ENCODE measurements at regions of chr6 and their contacts with region 1.

Region 1: GRCh38 chr6:28838634-28839442 is 84.9 kb downstream of the TRIM27 start:
- DNase-seq: peak; percentile 91
- H3K4me3 Mint-ChIP-seq: peak overlapping the region; percentile 95
- H3K27ac Mint-ChIP-seq: peak overlapping the region; percentile 86
- H3K4me1 Mint-ChIP-seq: peaks cover 9% of the 10 kb centered on the region
- H3K27me3 Mint-ChIP-seq: peaks cover 21% of the 10 kb centered on the region

Region 2: GRCh38 chr6:28489366-28490204 is 349.3 kb before region 1 on chr6:
- CTCF ChIA-PET with region 1: no interaction called
- intact Hi-C with region 1: loop called (anchors 10 kb)
- DNase-seq: peak; percentile 76
- H3K4me3 Mint-ChIP-seq: peak overlapping the region; percentile 81
- H3K27ac Mint-ChIP-seq: peak overlapping the region; percentile 79
- H3K4me1 Mint-ChIP-seq: peaks cover 23% of the 10 kb centered on the region
- H3K27me3 Mint-ChIP-seq: peaks cover 59% of the 10 kb centered on the region

Region 3: GRCh38 chr6:28863604-28864320 is 24.9 kb after region 1 on chr6:
- CTCF ChIA-PET with region 1: interaction called, 68 read pairs
- intact Hi-C with region 1: loop called (anchors 1 kb)
- DNase-seq: peak; percentile 89
- H3K4me3 Mint-ChIP-seq: peak overlapping the region; percentile 86
- H3K27ac Mint-ChIP-seq: peak overlapping the region; percentile 92
- H3K4me1 Mint-ChIP-seq: peaks cover 33% of the 10 kb centered on the region
- H3K27me3 Mint-ChIP-seq: peaks cover 3% of the 10 kb centered on the region

Region 4: GRCh38 chr6:28895134-28895812 is 56.4 kb after region 1 on chr6:
- CTCF ChIA-PET with region 1: interaction called, 9 read pairs
- intact Hi-C with region 1: loop called (anchors 1 kb)
- DNase-seq: peak; percentile 98
- H3K4me3 Mint-ChIP-seq: peak overlapping the region; percentile 96
- H3K27ac Mint-ChIP-seq: peak overlapping the region; percentile 100
- H3K4me1 Mint-ChIP-seq: peaks cover 6% of the 10 kb centered on the region
- H3K27me3 Mint-ChIP-seq: peaks cover 3% of the 10 kb centered on the region

Region 5: GRCh38 chr6:28981833-28982475 is 143.1 kb after region 1 on chr6:
- CTCF ChIA-PET with region 1: interaction called, 13 read pairs
- intact Hi-C with region 1: loop called (anchors 1 kb)
- DNase-seq: peak; percentile 78
- H3K4me3 Mint-ChIP-seq: peak overlapping the region; percentile 88
- H3K27ac Mint-ChIP-seq: peak overlapping the region; percentile 84
- H3K4me1 Mint-ChIP-seq: peaks cover 50% of the 10 kb centered on the region
- H3K27me3 Mint-ChIP-seq: peaks cover 29% of the 10 kb centered on the region

Region 6: DNA sequence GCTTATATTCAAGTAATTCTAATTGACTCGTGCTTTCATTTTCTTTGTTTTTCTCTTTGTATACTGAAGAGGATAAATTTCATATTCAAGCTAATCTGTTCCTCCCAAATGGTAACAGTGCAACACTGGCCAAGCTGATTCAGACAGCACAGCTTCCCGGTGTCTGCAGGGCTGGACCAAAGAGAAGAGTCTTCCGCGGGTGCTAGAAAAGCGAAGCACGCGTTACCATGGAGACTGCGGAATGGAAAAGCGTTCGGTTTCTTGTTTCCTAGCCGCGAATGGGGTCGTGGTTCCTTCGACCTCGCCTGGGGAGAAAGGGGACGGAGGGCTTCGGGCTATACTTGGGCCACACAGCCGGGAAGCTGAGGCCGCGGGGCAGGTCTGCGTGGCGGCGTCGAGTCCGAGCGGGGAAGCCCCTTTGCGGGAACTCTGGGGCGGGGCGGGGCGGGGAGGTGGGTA is 172.5 kb after region 1 on chr6:
- CTCF ChIA-PET with region 1: interaction called, 72 read pairs
- intact Hi-C with region 1: loop called (anchors 1 kb)
- DNase-seq: peak; percentile 65
- H3K4me3 Mint-ChIP-seq: peak overlapping the region; percentile 87
- H3K27ac Mint-ChIP-seq: peak overlapping the region; percentile 21
- H3K4me1 Mint-ChIP-seq: peaks cover 9% of the 10 kb centered on the region
- H3K27me3 Mint-ChIP-seq: peaks cover 11% of the 10 kb centered on the region

Region 7: GRCh38 chr6:29490552-29490951 is 651.7 kb after region 1 on chr6:
- CTCF ChIA-PET with region 1: no interaction called
- intact Hi-C with region 1: no loop called
- DNase-seq: no peak
- H3K4me3 Mint-ChIP-seq: no peak overlapping the region
- H3K27ac Mint-ChIP-seq: no peak overlapping the region
- H3K4me1 Mint-ChIP-seq: no peaks in the 10 kb centered on the region
- H3K27me3 Mint-ChIP-seq: peaks cover 8% of the 10 kb centered on the region

Region 8: GRCh38 chr6:29589423-29590048 is 750.7 kb after region 1 on chr6:
- CTCF ChIA-PET with region 1: no interaction called
- intact Hi-C with region 1: loop called (anchors 1 kb)
- DNase-seq: peak; percentile 74
- H3K4me3 Mint-ChIP-seq: no peak overlapping the region
- H3K27ac Mint-ChIP-seq: no peak overlapping the region
- H3K4me1 Mint-ChIP-seq: no peaks in the 10 kb centered on the region
- H3K27me3 Mint-ChIP-seq: peaks cover 9% of the 10 kb centered on the region

Measured in activated naive CD4-positive, alpha-beta T cell treated with anti-CD3 and anti-CD28 coated beads for 36 hours (primary cell).